Posterior cingulate gyrus (tissue), 11 donors: ENCODE measurements at regions of chr3 and their contacts with region 1.

Region 1: DNA sequence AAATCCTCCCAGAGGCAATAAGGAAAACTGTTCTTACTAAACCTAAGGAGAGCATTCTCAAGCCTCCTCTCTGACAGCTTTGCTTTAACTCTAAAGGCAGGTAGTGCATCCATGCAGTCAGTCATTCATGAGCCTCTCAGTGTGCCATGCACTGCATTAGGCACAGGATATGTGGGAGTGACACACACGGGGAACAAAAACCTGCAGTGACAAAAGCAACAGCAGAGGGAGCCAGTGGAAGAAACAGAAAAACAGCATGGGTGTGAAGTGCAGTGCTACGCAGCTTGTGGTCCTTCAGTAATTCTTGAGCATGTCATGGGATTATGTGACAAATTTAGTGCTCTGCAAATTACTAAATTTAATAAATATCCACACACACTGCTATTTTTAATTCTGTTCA is 230.7 kb downstream of the BBX start:
- DNase-seq: peak in 8 of 10 donors; percentile 42 to 90 (median 58)

Region 2: DNA sequence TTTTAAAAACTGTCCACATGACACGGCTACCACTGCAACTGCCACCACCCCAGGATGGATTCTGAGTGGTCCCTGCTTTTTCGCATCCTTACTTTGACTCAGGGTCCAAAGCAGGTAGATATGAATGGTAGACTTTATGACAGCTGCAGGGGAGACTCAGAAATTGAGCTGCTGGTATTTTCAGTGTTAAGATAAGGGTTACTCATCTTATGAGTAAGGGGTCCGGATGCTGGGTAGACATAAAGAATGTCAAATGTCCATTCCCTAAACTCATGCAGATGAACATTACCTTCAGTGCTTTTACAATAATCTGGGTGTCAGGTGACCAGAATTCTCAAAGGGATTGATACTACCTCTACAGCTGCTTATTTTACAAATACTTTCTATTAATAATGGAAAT is 256.6 kb before region 1 on chr3:
- intact Hi-C with region 1: no loop called
- DNase-seq: no peak

Region 3: DNA sequence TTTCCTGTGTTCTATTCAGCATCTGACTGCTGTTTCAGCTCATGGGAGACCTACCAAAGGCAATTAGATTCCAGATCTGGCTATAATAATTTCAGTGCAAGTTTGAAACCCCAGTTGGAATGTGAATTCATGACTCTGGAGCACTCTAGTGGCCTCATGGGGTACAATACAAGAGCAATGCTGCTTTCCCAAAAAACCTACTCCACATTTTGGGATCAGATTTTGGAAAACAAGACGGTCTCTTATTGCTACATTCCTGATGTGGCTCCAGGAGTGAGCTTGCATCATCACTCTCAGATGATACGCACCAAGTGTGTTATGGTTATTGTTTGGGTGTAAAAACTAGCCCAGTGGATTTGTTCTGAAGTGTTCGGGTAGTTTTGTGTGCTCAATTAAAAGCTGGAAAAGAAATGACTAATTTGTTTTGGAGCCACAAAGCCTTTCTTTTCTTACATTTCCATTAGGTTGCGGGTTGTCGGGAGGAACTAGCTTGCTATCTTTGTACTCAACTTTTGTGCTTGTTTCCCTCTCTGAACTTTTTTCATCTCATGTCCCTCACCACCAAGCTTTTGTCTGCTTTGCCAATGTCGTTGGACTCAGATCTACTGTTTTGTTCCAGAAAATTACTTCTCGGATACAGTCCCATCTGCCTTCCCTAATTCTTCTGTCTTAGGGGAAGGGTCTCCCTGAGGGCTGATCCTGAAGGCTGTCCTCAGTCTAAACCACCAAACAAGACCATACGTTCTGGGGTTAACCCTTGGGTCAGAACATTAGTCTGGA is 41.4 kb after region 1 on chr3:
- intact Hi-C with region 1: loop called (anchors 5 kb)
- DNase-seq: no peak

Region 4: DNA sequence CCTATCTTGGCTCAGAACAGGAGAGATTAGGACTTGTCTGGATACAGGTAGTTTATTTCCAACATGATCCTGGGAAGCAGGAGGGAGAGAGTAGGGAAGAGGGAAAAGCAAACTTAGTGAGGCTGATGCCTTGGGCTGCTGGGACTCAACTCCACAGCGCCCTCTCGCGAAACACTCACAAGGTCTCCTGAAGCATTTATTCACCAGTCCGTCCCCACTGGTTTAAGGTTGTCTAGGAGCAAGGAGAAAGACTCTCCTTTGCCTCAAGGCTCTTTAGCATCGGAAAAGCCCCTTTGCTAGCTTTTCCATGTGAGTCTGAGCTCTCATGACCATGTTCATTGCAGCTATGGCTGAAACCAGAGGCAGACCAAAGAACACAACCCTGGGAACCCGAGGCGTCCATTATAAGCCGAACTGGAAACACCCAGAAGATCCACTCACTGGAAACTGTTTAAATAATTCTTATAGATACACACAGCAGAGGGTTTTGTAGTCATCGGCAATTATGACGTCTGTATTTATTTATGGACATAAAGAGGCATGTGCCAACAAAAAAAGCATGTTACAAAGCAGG is 92.9 kb after region 1 on chr3:
- intact Hi-C with region 1: loop called (anchors 10 kb)
- DNase-seq: peak in 9 of 10 donors; percentile 32 to 94 (median 70)

Region 5: GRCh38 chr3:107938143-107938542 is 184.7 kb after region 1 on chr3:
- intact Hi-C with region 1: no loop called
- DNase-seq: no peak